CD4-positive, alpha-beta T cell (primary cell): ENCODE measurements at regions of chr7 and their contacts with region 1.

Region 1: GRCh38 chr7:111735661-111736551 is 173.6 kb upstream of the IMMP2L start:
- DNase-seq: peak in 12 of 14 experiments; percentile 15 to 76 (median 41)
- ATAC-seq: peak; percentile 51
- H3K4me3 ChIP-seq: no peak overlapping the region
- H3K4me3 Mint-ChIP-seq: no peak overlapping the region
- H3K27ac ChIP-seq: no peak overlapping the region
- H3K27ac Mint-ChIP-seq: no peak overlapping the region
- H3K4me1 ChIP-seq: no peaks in the 10 kb centered on the region
- H3K4me1 Mint-ChIP-seq: no peaks in the 10 kb centered on the region
- H3K27me3 ChIP-seq: no peaks in the 10 kb centered on the region
- H3K27me3 Mint-ChIP-seq: peaks cover 14% of the 10 kb centered on the region
- CTCF ChIP-seq: peak; percentile 95

Region 2: GRCh38 chr7:109844362-109844761 is 1891.5 kb before region 1 on chr7:
- CTCF ChIA-PET with region 1: no interaction called
- POLR2A ChIA-PET with region 1: no interaction called
- intact Hi-C with region 1: loop called in 1 of 2 experiments (anchors 2 kb)
- DNase-seq: peak in 3 of 14 experiments; percentile 5 to 29 (median 21)
- ATAC-seq: no peak
- H3K4me3 ChIP-seq: no peak overlapping the region
- H3K4me3 Mint-ChIP-seq: no peak overlapping the region
- H3K27ac ChIP-seq: no peak overlapping the region
- H3K27ac Mint-ChIP-seq: no peak overlapping the region
- H3K4me1 ChIP-seq: no peaks in the 10 kb centered on the region
- H3K4me1 Mint-ChIP-seq: no peaks in the 10 kb centered on the region
- H3K27me3 ChIP-seq: no peaks in the 10 kb centered on the region
- H3K27me3 Mint-ChIP-seq: no peaks in the 10 kb centered on the region
- CTCF ChIP-seq: peak; percentile 44

Region 3: GRCh38 chr7:110090110-110090769 is 1645.7 kb before region 1 on chr7:
- CTCF ChIA-PET with region 1: no interaction called
- POLR2A ChIA-PET with region 1: no interaction called
- intact Hi-C with region 1: loop called in 1 of 2 experiments (anchors 10 kb)
- DNase-seq: peak in 4 of 14 experiments; percentile 10 to 29 (median 20)
- ATAC-seq: no peak
- H3K4me3 ChIP-seq: no peak overlapping the region
- H3K4me3 Mint-ChIP-seq: no peak overlapping the region
- H3K27ac ChIP-seq: no peak overlapping the region
- H3K27ac Mint-ChIP-seq: no peak overlapping the region
- H3K4me1 ChIP-seq: no peaks in the 10 kb centered on the region
- H3K4me1 Mint-ChIP-seq: no peaks in the 10 kb centered on the region
- H3K27me3 ChIP-seq: no peaks in the 10 kb centered on the region
- H3K27me3 Mint-ChIP-seq: peaks cover 6% of the 10 kb centered on the region
- CTCF ChIP-seq: peak; percentile 36

Region 4: GRCh38 chr7:111103678-111104274 is 632.1 kb before region 1 on chr7:
- CTCF ChIA-PET with region 1: no interaction called
- POLR2A ChIA-PET with region 1: no interaction called
- intact Hi-C with region 1: loop called (anchors 5 to 10 kb)
- DNase-seq: no peak
- ATAC-seq: no peak
- H3K4me3 ChIP-seq: no peak overlapping the region
- H3K4me3 Mint-ChIP-seq: no peak overlapping the region
- H3K27ac ChIP-seq: no peak overlapping the region
- H3K27ac Mint-ChIP-seq: peak overlapping the region; percentile 18
- H3K4me1 ChIP-seq: no peaks in the 10 kb centered on the region
- H3K4me1 Mint-ChIP-seq: peaks cover 68% of the 10 kb centered on the region
- H3K27me3 ChIP-seq: no peaks in the 10 kb centered on the region
- H3K27me3 Mint-ChIP-seq: no peaks in the 10 kb centered on the region
- CTCF ChIP-seq: no peak

Region 5: GRCh38 chr7:111508387-111508786 is 227.5 kb before region 1 on chr7:
- CTCF ChIA-PET with region 1: no interaction called
- POLR2A ChIA-PET with region 1: no interaction called
- intact Hi-C with region 1: no loop called
- DNase-seq: no peak
- ATAC-seq: no peak
- H3K4me3 ChIP-seq: no peak overlapping the region
- H3K4me3 Mint-ChIP-seq: no peak overlapping the region
- H3K27ac ChIP-seq: no peak overlapping the region
- H3K27ac Mint-ChIP-seq: no peak overlapping the region
- H3K4me1 ChIP-seq: no peaks in the 10 kb centered on the region
- H3K4me1 Mint-ChIP-seq: peaks cover 8% of the 10 kb centered on the region
- H3K27me3 ChIP-seq: no peaks in the 10 kb centered on the region
- H3K27me3 Mint-ChIP-seq: no peaks in the 10 kb centered on the region
- CTCF ChIP-seq: no peak

Region 6: GRCh38 chr7:111752022-111752582 is 16.2 kb after region 1 on chr7:
- CTCF ChIA-PET with region 1: no interaction called
- POLR2A ChIA-PET with region 1: no interaction called
- intact Hi-C with region 1: no loop called
- DNase-seq: peak; percentile 12 to 69 (median 40)
- ATAC-seq: peak; percentile 44
- H3K4me3 ChIP-seq: no peak overlapping the region
- H3K4me3 Mint-ChIP-seq: no peak overlapping the region
- H3K27ac ChIP-seq: no peak overlapping the region
- H3K27ac Mint-ChIP-seq: no peak overlapping the region
- H3K4me1 ChIP-seq: no peaks in the 10 kb centered on the region
- H3K4me1 Mint-ChIP-seq: no peaks in the 10 kb centered on the region
- H3K27me3 ChIP-seq: no peaks in the 10 kb centered on the region
- H3K27me3 Mint-ChIP-seq: peaks cover 20% of the 10 kb centered on the region
- CTCF ChIP-seq: peak; percentile 57